Activated CD4-positive, alpha-beta T cell treated with anti-CD3 and anti-CD28 coated beads, Interleukin-2, amount 10 ng/mL, durations not matched to agents 24 days and 14 days (primary cell): ENCODE measurements at regions of chr12 and their contacts with region 1.

Region 1: DNA sequence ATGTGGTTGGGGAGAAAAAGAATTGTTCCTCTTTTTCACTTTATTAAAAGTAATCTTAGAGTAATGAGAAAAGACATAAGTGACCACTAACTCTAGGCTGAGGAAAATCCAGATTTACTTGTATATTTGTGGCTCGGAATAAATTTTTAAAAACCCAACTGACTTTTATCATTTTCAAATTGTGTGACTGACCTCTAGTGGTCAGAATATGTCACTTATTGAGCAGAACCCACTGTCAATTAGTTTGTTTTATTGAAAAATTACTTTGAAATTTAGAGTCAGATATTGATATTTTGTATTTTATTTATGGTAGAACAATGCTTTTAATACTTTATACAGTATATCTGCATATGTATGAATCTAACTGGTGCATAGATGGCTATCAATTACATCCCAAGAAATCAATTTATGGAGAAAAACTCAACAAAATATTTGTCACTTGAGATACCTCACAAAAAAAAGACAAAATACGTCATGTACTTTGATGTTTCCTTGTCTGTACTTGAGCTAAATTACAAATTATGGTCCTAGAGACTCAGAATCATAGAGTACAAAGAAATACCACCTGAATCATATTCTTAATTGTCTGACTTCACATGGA is 229.4 kb downstream of the CNTN1 start:
- DNase-seq: no peak
- H3K4me3 Mint-ChIP-seq: no peak overlapping the region
- H3K27ac Mint-ChIP-seq: no peak overlapping the region
- H3K4me1 Mint-ChIP-seq: no peaks in the 10 kb centered on the region
- H3K27me3 Mint-ChIP-seq: no peaks in the 10 kb centered on the region

Region 2: GRCh38 chr12:40622246-40622838 is 299.3 kb before region 1 on chr12:
- intact Hi-C with region 1: loop called (anchors 1 kb)
- DNase-seq: peak; percentile 72
- H3K4me3 Mint-ChIP-seq: no peak overlapping the region
- H3K27ac Mint-ChIP-seq: no peak overlapping the region
- H3K4me1 Mint-ChIP-seq: no peaks in the 10 kb centered on the region
- H3K27me3 Mint-ChIP-seq: no peaks in the 10 kb centered on the region

Region 3: DNA sequence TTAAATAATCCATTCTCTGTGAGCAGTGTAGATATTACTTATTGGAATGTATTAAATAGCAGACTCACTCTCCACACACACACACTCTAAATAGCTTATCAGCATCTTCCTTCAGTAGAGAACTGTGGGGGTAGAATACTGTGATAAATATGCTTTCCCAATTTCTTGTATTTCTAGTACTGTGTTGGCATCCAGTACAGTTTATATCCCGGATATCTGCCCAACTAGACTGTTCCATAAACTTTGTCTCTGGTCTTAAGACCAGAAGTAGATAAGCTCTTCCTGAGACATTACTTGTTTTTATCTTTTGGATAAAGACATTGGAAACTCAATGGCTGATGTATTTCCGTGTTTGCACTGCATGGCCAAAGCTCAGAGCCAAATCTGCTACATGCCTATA is 130.3 kb after region 1 on chr12:
- intact Hi-C with region 1: no loop called
- DNase-seq: no peak
- H3K4me3 Mint-ChIP-seq: no peak overlapping the region
- H3K27ac Mint-ChIP-seq: no peak overlapping the region
- H3K4me1 Mint-ChIP-seq: no peaks in the 10 kb centered on the region
- H3K27me3 Mint-ChIP-seq: no peaks in the 10 kb centered on the region

Region 4: GRCh38 chr12:41120211-41120610 is 198.5 kb after region 1 on chr12:
- intact Hi-C with region 1: no loop called
- DNase-seq: no peak
- H3K4me3 Mint-ChIP-seq: no peak overlapping the region
- H3K27ac Mint-ChIP-seq: no peak overlapping the region
- H3K4me1 Mint-ChIP-seq: no peaks in the 10 kb centered on the region
- H3K27me3 Mint-ChIP-seq: no peaks in the 10 kb centered on the region